Activated CD4-positive, alpha-beta T cell treated with anti-CD3 and anti-CD28 coated beads for 36 hours (primary cell): ENCODE measurements at regions of chr10 and their contacts with region 1.

Region 1: DNA sequence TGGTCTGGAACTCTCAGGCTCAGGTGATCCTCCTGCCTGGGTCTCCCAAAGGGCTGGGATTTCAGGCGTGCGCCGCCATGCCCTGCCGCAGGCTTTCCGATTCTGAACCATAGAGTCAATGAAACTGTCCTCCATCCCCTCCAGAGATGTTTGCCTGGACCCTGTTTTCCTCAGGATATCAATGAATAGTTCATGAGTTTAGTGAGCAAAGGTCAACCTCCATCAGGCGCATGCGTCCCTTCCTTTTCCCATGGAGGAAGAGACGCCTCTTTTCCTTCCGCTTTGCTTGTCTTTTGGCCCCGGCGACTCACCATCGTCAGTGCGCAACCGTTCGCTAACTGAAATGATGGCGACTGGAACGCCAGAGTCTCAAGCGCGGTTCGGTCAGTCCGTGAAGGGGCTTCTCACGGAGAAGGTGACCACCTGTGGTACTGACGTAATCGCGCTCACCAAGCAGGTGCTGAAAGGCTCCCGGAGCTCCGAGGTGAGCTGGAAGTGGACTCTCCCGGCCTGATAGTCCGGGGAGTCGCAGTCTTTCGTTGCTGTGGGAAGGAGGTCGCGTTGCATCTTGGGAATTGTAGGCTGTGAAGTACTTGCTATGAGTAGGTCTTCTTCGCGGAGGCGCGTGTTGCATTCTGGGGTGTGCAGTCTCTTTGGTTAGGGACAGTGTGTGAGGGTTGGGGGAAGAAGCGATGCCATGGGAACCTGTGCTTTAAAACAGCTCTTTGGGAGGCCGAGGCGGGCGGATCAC is at the start of gene BORCS7:
- DNase-seq: peak; percentile 94
- ATAC-seq: peak; percentile 100
- H3K4me3 Mint-ChIP-seq: peak within 1 kb of the TSS; percentile 95
- H3K27ac Mint-ChIP-seq: peak within 1 kb of the TSS; percentile 99
- H3K4me1 Mint-ChIP-seq: peaks cover 14% of the 10 kb centered on the region
- H3K27me3 Mint-ChIP-seq: no peaks in the 10 kb centered on the region
- total RNA-seq, gene BORCS7: 4.5 to 5.1 TPM

Region 2: GRCh38 chr10:102713814-102714620 is 140.1 kb before region 1 on chr10 and contains the start of gene ARL3:
- CTCF ChIA-PET with region 1: no interaction called
- POLR2A ChIA-PET with region 1: no interaction called
- intact Hi-C with region 1: loop called in 1 of 2 experiments (anchors 1 kb)
- DNase-seq: peak; percentile 99
- ATAC-seq: peak; percentile 90
- H3K4me3 Mint-ChIP-seq: peak within 1 kb of the TSS; percentile 82
- H3K27ac Mint-ChIP-seq: peak within 1 kb of the TSS; percentile 81
- H3K4me1 Mint-ChIP-seq: peaks cover 59% of the 10 kb centered on the region
- H3K27me3 Mint-ChIP-seq: no peaks in the 10 kb centered on the region
- total RNA-seq, gene ARL3: 6.4 to 6.9 TPM

Region 3: DNA sequence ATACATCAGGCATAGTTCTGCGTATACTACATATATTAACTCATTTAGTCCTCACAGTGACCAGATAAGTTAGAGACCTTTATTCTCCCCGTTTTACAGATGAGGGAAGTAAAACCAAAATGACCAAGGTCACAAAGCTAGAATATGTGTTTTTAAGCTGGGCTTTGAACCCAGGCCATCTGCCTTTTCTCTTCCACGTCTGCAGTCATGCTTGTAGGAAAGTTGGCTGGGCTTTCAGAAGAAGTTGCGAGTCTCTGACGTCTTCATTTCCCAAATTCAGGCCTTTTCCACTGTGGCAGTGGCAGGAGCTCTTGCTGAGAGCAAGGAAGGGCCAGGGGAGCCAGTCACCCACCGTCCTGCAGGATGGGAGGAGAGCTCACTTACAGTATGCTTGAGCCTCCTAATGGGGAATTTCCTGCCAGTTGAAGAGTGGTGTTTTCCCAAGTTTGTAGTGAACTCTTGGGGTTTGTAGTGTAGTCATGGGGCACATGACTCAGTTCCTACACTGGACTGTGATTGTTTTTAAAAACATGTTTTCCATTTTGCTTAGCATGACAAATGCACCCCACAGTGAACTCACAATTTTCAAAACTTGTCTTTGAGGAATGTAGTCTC is 51.1 kb before region 1 on chr10:
- CTCF ChIA-PET with region 1: interaction called, 3 read pairs
- POLR2A ChIA-PET with region 1: no interaction called
- intact Hi-C with region 1: loop called in 1 of 2 experiments (anchors 1 kb)
- DNase-seq: peak; percentile 41
- ATAC-seq: peak; percentile 92
- H3K4me3 Mint-ChIP-seq: no peak overlapping the region
- H3K27ac Mint-ChIP-seq: peak overlapping the region; percentile 93
- H3K4me1 Mint-ChIP-seq: peaks cover 34% of the 10 kb centered on the region
- H3K27me3 Mint-ChIP-seq: no peaks in the 10 kb centered on the region

Region 4: GRCh38 chr10:103231047-103231551 is 377.0 kb after region 1 on chr10:
- CTCF ChIA-PET with region 1: no interaction called
- POLR2A ChIA-PET with region 1: no interaction called
- intact Hi-C with region 1: no loop called
- DNase-seq: no peak
- ATAC-seq: no peak
- H3K4me3 Mint-ChIP-seq: no peak overlapping the region
- H3K27ac Mint-ChIP-seq: no peak overlapping the region
- H3K4me1 Mint-ChIP-seq: no peaks in the 10 kb centered on the region
- H3K27me3 Mint-ChIP-seq: peaks cover 1% of the 10 kb centered on the region

Region 5: DNA sequence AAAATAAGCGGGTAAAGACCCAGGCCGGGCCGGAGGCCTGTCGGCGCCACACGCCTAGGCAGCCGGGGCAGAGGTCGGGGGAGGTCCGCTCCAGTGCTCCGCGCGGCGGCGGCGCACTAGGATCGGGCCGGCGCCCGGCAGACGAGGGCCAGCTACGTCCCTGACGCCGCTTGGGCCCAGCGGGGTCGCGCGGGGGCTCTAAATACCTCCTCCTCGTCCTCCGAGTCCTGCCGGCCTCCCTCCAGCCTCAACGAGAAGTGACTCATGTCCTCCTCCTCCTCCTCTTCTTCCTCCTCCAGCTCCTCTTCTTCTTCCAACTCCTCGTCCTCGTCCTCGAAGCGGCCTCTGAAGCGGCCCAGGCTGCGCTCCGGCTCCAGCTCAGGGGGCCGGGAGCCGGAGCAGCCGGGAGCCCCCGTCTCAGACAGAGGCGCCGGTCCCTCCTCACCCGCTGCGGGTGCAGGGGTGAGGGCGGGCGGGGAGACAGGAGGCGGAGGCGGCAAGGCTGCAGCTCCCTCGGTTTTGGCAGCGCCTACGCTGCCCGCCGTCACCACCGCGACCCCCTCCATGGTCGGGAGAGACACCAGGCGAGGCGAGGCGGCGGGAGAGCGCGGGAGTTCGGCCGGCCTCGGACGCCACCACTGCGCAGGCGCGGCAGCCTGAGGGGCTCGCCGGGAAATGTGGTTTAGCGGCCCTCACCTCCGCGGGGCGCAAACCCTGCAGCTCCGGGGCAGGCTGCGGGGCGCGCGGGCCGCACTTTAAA is 496.6 kb after region 1 on chr10 and contains the start of gene PCGF6:
- CTCF ChIA-PET with region 1: interaction called, 4 read pairs
- POLR2A ChIA-PET with region 1: no interaction called
- intact Hi-C with region 1: loop called in 1 of 2 experiments (anchors 5 kb)
- DNase-seq: peak; percentile 83
- ATAC-seq: peak; percentile 86
- H3K4me3 Mint-ChIP-seq: peak within 1 kb of the TSS; percentile 86
- H3K27ac Mint-ChIP-seq: peak within 1 kb of the TSS; percentile 84
- H3K4me1 Mint-ChIP-seq: peaks cover 9% of the 10 kb centered on the region
- H3K27me3 Mint-ChIP-seq: no peaks in the 10 kb centered on the region
- total RNA-seq, gene PCGF6: 10.4 to 14.8 TPM

Region 6: DNA sequence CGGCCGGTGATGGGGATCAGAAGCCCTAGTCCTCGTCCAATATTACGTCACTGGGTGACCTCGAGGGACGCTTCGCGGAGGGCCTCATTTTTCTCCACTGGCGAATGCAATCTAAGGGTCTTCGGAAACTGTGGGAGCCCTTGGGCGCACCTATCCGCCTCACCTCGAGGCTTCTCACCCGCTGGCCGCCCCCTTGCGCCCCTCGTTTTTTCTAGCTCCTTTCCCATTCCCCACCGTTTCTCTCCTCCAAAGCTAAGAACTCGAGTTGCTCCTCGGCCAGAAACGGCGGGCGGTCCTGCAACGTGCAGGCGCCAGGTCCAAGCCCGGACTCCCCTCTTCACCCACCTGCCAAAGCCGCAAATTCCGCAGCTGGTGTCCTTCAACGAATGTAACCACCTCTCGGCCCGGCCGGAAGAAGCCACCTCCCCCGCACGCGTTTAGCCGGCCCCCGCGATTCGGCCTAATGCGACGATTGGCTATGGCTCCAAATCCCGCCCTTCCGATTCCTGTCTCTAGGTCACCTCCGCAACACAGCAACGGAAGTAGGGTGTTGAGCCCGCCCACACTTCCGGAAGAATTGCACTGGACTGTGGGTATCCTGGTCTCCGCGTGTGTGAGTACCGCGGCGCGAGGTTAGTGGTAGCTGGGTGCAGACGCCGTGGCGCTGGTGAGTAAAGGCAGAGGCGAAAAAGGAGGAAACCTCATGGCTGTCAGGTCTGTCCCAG is 542.1 kb after region 1 on chr10 and contains the starts of genes ATP5MK and PDCD11:
- CTCF ChIA-PET with region 1: no interaction called
- POLR2A ChIA-PET with region 1: no interaction called
- intact Hi-C with region 1: loop called in 1 of 2 experiments (anchors 1 kb)
- DNase-seq: peak; percentile 98
- ATAC-seq: peak; percentile 100
- H3K4me3 Mint-ChIP-seq: peak within 1 kb of the TSS; percentile 99
- H3K27ac Mint-ChIP-seq: peak within 1 kb of the TSS; percentile 95
- H3K4me1 Mint-ChIP-seq: peaks cover 57% of the 10 kb centered on the region
- H3K27me3 Mint-ChIP-seq: no peaks in the 10 kb centered on the region
- total RNA-seq, gene ATP5MK: 377 to 447 TPM
- total RNA-seq, gene PDCD11: 60.6 to 73.8 TPM